Common myeloid progenitor, CD34-positive (primary cell): ENCODE measurements at regions of chr3 and their contacts with region 1.

Region 1: GRCh38 chr3:129365296-129366136 is 62.9 kb downstream of the EFCAB12 start:
- DNase-seq: peak in 2 of 3 donors; percentile 59 to 73
- H3K4me3 ChIP-seq: peak overlapping the region in 1 of 7 experiments; percentile 25
- H3K27ac ChIP-seq: no peak overlapping the region
- H3K4me1 ChIP-seq: peaks cover 0 to 12% (median 6%) of the 10 kb centered on the region in 4 experiments
- H3K27me3 ChIP-seq: no peaks in the 10 kb centered on the region

Region 2: DNA sequence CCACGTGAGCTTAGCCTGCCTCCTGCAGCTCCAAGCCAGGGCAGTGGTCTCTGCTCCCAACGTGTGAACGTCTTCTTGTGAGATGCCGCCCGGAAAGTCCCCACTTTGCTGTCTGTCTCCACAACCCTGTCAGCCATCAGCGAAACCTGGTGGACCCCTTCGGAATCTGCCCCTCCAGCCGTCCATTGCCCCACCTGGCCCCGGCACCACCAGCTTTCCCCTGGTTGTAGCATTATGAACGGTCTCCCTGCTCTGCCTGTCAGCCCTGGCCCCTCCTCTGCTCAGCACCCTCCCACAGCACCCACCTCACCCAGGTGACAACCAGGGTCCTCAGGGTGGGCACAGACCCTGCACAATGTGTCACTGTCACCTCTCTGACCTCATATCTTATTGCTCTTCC is 15.7 kb before region 1 on chr3:
- CTCF ChIA-PET with region 1: interaction called, 10 read pairs
- POLR2A ChIA-PET with region 1: no interaction called
- DNase-seq: no peak
- H3K4me3 ChIP-seq: no peak overlapping the region
- H3K27ac ChIP-seq: no peak overlapping the region
- H3K4me1 ChIP-seq: peaks cover 0 to 22% (median 16%) of the 10 kb centered on the region in 4 experiments
- H3K27me3 ChIP-seq: no peaks in the 10 kb centered on the region

Region 3: DNA sequence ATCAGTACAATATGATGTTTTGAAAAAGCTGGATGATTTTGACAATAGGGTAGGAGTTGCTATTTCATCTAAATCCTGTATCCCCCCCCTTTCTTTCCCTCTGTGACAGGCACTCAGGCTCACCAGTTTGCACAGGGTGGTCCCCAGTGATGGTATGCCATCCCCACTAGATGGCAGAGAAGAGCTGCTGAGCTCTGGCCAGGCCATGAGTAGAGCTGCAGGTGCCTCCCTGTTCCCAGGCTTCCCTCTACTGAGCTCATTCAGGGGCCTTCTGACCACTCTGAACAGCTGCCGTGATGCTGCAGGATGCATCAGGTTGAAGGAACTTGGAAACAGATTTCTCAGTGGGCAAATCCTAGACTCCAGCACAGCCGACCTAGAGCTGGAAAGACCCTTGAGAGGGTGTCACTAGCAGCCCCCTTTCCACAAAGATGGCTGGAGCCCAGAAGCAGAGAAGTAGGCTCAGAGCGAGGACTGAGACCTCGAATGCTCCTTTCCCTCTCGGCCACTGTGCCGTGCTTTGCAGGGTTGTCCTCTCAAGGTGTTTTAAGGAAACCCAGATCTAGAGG is 17.9 kb after region 1 on chr3:
- CTCF ChIA-PET with region 1: no interaction called
- POLR2A ChIA-PET with region 1: no interaction called
- DNase-seq: peak; percentile 47 to 70 (median 68)
- H3K4me3 ChIP-seq: no peak overlapping the region
- H3K27ac ChIP-seq: no peak overlapping the region
- H3K4me1 ChIP-seq: peaks cover 0 to 8% (median 2%) of the 10 kb centered on the region in 4 experiments
- H3K27me3 ChIP-seq: no peaks in the 10 kb centered on the region

Region 4: DNA sequence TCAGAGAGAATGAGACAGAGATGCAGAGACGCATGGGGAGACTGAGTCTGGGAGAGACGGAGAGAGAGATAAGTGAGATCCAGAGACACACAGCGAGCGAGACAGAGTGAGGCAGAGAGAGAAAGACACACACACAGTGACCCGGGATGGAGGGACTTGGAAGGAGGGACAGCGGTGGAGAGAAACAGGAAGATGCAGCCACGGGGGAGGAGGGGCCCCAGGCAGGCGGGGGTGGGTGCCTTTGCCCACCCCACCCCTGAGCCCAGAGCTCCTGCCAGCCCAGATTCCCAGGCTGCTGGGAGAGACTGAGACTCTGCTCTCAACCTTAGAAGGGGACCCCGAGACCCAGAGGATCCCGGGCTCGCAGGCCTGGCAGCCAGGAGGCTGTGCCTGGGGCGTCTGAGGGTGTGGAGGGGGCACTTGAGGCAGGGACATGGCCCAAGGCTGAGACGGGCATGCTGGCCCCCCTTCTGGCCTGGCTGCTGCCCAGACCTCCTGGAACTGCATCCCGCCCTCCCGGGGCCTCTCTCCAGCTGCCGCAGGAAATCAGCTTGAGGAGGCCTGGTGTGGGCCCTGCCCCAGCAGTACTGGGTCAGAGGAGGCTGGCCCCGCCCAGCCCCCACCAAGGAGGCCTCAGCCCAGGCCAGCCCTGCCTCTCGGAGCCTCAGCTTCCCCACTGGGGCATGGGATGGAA is 195.5 kb after region 1 on chr3:
- CTCF ChIA-PET with region 1: no interaction called
- POLR2A ChIA-PET with region 1: no interaction called
- DNase-seq: peak in 2 of 3 donors; percentile 12 to 17
- H3K4me3 ChIP-seq: no peak overlapping the region
- H3K27ac ChIP-seq: no peak overlapping the region
- H3K4me1 ChIP-seq: peaks cover 0 to 42% (median 35%) of the 10 kb centered on the region in 4 experiments
- H3K27me3 ChIP-seq: no peaks in the 10 kb centered on the region